ENCODE measurements at regions of chr6 and their contacts with region 1.

Region 1: DNA sequence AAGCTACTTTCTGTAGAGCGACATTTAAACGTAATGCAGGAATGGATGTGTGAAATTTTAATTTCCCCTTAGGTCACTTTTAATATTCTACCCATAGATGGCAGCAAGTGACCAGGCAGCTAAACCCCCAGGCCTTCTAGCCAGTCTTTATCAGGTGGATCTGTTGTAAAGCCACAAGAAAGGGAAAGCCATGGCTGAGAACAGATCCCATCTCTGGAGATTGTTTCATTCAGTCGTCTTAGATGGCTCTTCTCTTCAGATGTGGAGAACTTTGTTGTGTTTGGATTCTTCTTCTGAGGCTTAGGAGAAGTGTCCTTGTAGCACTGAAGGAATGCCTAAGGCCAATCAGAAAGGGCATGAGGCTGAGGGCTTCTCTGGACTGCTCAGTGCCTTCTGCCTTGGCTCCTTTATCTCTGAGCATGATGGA is 15.8 kb upstream of the RNF182 start:
- DNase-seq: peak; percentile 74
- ATAC-seq: peak; percentile 94
- H3K4me3 ChIP-seq: no peak overlapping the region
- H3K27ac ChIP-seq: no peak overlapping the region
- H3K4me1 ChIP-seq: no peaks in the 10 kb centered on the region
- H3K27me3 ChIP-seq: peaks cover 11% of the 10 kb centered on the region
- CTCF ChIP-seq: peak; percentile 94
- POLR2A ChIP-seq: peak; percentile 53; the same call in 1 of the 2 replicates
- RAD21 ChIP-seq: peak; percentile 98

Region 2: GRCh38 chr6:13924146-13924948 is 15.4 kb after region 1 on chr6:
- CTCF ChIA-PET with region 1: interaction called, 10 read pairs
- POLR2A ChIA-PET with region 1: interaction called, 3 read pairs
- dilution Hi-C with region 1: no loop called
- in situ Hi-C with region 1: no loop called
- intact Hi-C with region 1: no loop called
- DNase-seq: peak; percentile 36
- ATAC-seq: peak; percentile 88
- H3K4me3 ChIP-seq: peak overlapping the region; percentile 57
- H3K27ac ChIP-seq: peak overlapping the region; percentile 70
- H3K4me1 ChIP-seq: peaks cover 2% of the 10 kb centered on the region
- H3K27me3 ChIP-seq: peaks cover 4% of the 10 kb centered on the region; the same call in 1 of the 2 replicates
- CTCF ChIP-seq: no peak
- POLR2A ChIP-seq: no peak
- RAD21 ChIP-seq: no peak

Region 3: GRCh38 chr6:14046476-14047068 is 137.6 kb after region 1 on chr6:
- CTCF ChIA-PET with region 1: interaction called, 19 read pairs
- POLR2A ChIA-PET with region 1: no interaction called
- dilution Hi-C with region 1: no loop called
- in situ Hi-C with region 1: no loop called
- intact Hi-C with region 1: loop called (anchors 1 kb)
- DNase-seq: peak; percentile 48
- ATAC-seq: peak; percentile 88
- H3K4me3 ChIP-seq: no peak overlapping the region
- H3K27ac ChIP-seq: no peak overlapping the region
- H3K4me1 ChIP-seq: no peaks in the 10 kb centered on the region
- H3K27me3 ChIP-seq: peaks cover 12% of the 10 kb centered on the region
- CTCF ChIP-seq: peak; percentile 66
- POLR2A ChIP-seq: no peak
- RAD21 ChIP-seq: peak; percentile 71

Region 4: GRCh38 chr6:14066782-14067406 is 157.9 kb after region 1 on chr6:
- CTCF ChIA-PET with region 1: interaction called, 88 read pairs
- POLR2A ChIA-PET with region 1: no interaction called
- dilution Hi-C with region 1: no loop called
- in situ Hi-C with region 1: loop called (anchors 5 kb)
- intact Hi-C with region 1: loop called (anchors 1 kb)
- DNase-seq: peak; percentile 80
- ATAC-seq: peak; percentile 76
- H3K4me3 ChIP-seq: no peak overlapping the region
- H3K27ac ChIP-seq: no peak overlapping the region
- H3K4me1 ChIP-seq: peaks cover 4% of the 10 kb centered on the region
- H3K27me3 ChIP-seq: 0 out of 2 replicates have a peak, but pooled peaks cover 1% of the 10 kb centered on the region
- CTCF ChIP-seq: peak; percentile 78
- POLR2A ChIP-seq: no peak
- RAD21 ChIP-seq: peak; percentile 85

Region 5: GRCh38 chr6:14144678-14145113 is 235.7 kb after region 1 on chr6:
- CTCF ChIA-PET with region 1: interaction called, 6 read pairs
- POLR2A ChIA-PET with region 1: no interaction called
- dilution Hi-C with region 1: no loop called
- in situ Hi-C with region 1: loop called (anchors 5 kb)
- intact Hi-C with region 1: loop called (anchors 1 kb)
- DNase-seq: peak; percentile 62
- ATAC-seq: peak; percentile 94
- H3K4me3 ChIP-seq: no peak overlapping the region
- H3K27ac ChIP-seq: no peak overlapping the region
- H3K4me1 ChIP-seq: no peaks in the 10 kb centered on the region
- H3K27me3 ChIP-seq: peaks cover 34% of the 10 kb centered on the region
- CTCF ChIP-seq: peak; percentile 78
- POLR2A ChIP-seq: no peak
- RAD21 ChIP-seq: peak; percentile 74

Region 6: GRCh38 chr6:15389765-15390723 is 1481.1 kb after region 1 on chr6:
- CTCF ChIA-PET with region 1: no interaction called
- POLR2A ChIA-PET with region 1: no interaction called
- dilution Hi-C with region 1: no loop called
- in situ Hi-C with region 1: loop called (anchors 25 kb)
- intact Hi-C with region 1: no loop called
- DNase-seq: peak; percentile 66
- ATAC-seq: peak; percentile 73
- H3K4me3 ChIP-seq: no peak overlapping the region
- H3K27ac ChIP-seq: no peak overlapping the region
- H3K4me1 ChIP-seq: peaks cover 28% of the 10 kb centered on the region
- H3K27me3 ChIP-seq: no peaks in the 10 kb centered on the region
- CTCF ChIP-seq: peak; percentile 69
- POLR2A ChIP-seq: no peak
- RAD21 ChIP-seq: peak; percentile 86

Measured in IMR-90 (cell line).